ENCODE measurements at regions of chr15 and their contacts with region 1.

Region 1: DNA sequence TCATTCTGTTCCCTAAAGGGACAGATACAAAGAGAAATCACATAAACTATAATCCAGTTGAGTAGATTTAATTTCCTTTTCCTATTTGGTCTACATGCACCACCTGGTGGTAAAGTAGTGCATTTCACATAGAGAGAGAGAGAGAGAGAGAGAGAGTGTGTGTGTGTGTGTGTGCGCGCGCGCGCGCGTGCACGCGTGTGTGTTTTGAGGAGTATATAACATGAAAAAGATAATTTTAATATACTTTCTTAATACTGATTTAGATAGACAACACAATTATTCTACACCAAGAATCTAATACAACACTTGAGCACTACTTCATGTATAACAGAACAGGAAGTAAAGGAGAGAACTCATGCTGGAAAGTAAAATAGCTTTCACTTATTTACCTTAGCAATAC is 1.1 kb upstream of the FGF7 start:
- DNase-seq: peak; percentile 24 to 47
- ATAC-seq: peak; percentile 45 to 78 (median 52)
- H3K4me3 ChIP-seq: peak overlapping the region in 9 of 10 donors; percentile 2 to 54 (median 23)
- H3K27ac ChIP-seq: peak overlapping the region in 4 of 10 donors; percentile 65 to 80 (median 76)
- H3K4me1 ChIP-seq: peaks cover 0 to 8% (median 0%) of the 10 kb centered on the region in 9 donors
- H3K27me3 ChIP-seq: no peaks in the 10 kb centered on the region
- CTCF ChIP-seq: peak; percentile 39 to 83 (median 70)

Region 2: GRCh38 chr15:48861813-48862431 is 560.1 kb before region 1 on chr15:
- intact Hi-C with region 1: loop called in 8 of 10 experiments (anchors 2 to 10 kb)
- DNase-seq: peak in 1 of 2 donors; percentile 33
- ATAC-seq: peak in 7 of 8 donors; percentile 51 to 80 (median 67)
- H3K4me3 ChIP-seq: no peak overlapping the region
- H3K27ac ChIP-seq: no peak overlapping the region
- H3K4me1 ChIP-seq: peaks cover 0 to 5% (median 0%) of the 10 kb centered on the region in 9 donors
- H3K27me3 ChIP-seq: no peaks in the 10 kb centered on the region
- CTCF ChIP-seq: peak; percentile 84 to 95 (median 90)

Region 3: DNA sequence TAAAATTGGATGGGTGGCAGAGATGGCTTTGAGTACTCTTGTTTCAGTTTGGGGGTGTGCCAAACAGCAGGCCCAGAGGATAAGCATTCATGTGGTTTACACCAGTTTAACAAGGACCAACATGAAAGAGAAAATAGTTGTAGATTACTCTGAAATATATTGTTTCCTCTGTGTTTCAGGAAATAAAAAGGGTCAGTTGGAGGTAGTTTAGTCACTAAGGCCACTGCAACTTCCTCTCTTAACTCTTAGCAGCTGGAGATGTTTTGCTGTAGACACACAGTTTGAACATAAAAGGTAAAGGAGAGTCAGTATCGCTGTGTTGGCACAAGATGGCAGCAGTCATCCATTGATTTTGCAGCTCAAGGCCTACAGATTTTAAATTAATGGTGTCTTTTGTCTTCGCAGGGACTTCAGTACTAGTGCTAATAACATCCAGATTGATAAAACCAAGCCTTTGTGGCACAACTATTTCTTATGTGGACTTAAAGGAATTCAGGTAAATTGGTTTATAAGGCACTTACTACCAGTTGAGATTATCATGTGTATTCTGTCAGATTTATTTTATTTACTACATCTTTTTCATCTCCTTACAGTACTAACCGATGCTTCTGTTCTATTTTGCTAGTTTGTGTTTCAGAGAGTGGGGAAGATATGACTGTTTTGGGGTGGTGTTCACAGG is 186.4 kb before region 1 on chr15:
- intact Hi-C with region 1: loop called in 9 of 10 experiments (anchors 1 to 10 kb)
- DNase-seq: peak in 1 of 2 donors; percentile 46
- ATAC-seq: peak; percentile 64 to 85 (median 80)
- H3K4me3 ChIP-seq: no peak overlapping the region
- H3K27ac ChIP-seq: peak overlapping the region in 3 of 10 donors; percentile 3 to 52 (median 23)
- H3K4me1 ChIP-seq: peaks cover 0 to 52% (median 21%) of the 10 kb centered on the region in 9 donors
- H3K27me3 ChIP-seq: no peaks in the 10 kb centered on the region
- CTCF ChIP-seq: peak; percentile 46 to 82 (median 78)

Region 4: GRCh38 chr15:49492824-49493223 is 70.8 kb after region 1 on chr15:
- intact Hi-C with region 1: loop called in 1 of 10 experiments (anchors 10 kb)
- DNase-seq: no peak
- ATAC-seq: peak in 1 of 8 donors; percentile 56
- H3K4me3 ChIP-seq: no peak overlapping the region
- H3K27ac ChIP-seq: no peak overlapping the region
- H3K4me1 ChIP-seq: no peaks in the 10 kb centered on the region
- H3K27me3 ChIP-seq: no peaks in the 10 kb centered on the region
- CTCF ChIP-seq: no peak

Region 5: GRCh38 chr15:50145451-50145872 is 723.5 kb after region 1 on chr15:
- intact Hi-C with region 1: loop called in 1 of 10 experiments (anchors 10 kb)
- DNase-seq: no peak
- ATAC-seq: peak in 7 of 8 donors; percentile 74 to 94 (median 83)
- H3K4me3 ChIP-seq: no peak overlapping the region
- H3K27ac ChIP-seq: no peak overlapping the region
- H3K4me1 ChIP-seq: peaks cover 0 to 15% (median 0%) of the 10 kb centered on the region in 9 donors
- H3K27me3 ChIP-seq: no peaks in the 10 kb centered on the region
- CTCF ChIP-seq: peak; percentile 45 to 75 (median 62)

Measured in heart right ventricle (tissue), 16 donors.